Activated naive CD8-positive, alpha-beta T cell treated with anti-CD3 and anti-CD28 coated beads, Interleukin-2, amount 10 ng/mL, durations not matched to agents 7 days and 5 days (primary cell): ENCODE measurements at regions of chr12 and their contacts with region 1.

Region 1: GRCh38 chr12:8483079-8483478 is 27.3 kb downstream of the CLEC6A start:
- DNase-seq: no peak
- ATAC-seq: peak; percentile 99
- H3K4me3 Mint-ChIP-seq: peak overlapping the region; percentile 57
- H3K27ac Mint-ChIP-seq: peak overlapping the region; percentile 87
- H3K4me1 Mint-ChIP-seq: peaks cover 21% of the 10 kb centered on the region
- H3K27me3 Mint-ChIP-seq: peaks cover 21% of the 10 kb centered on the region

Region 2: DNA sequence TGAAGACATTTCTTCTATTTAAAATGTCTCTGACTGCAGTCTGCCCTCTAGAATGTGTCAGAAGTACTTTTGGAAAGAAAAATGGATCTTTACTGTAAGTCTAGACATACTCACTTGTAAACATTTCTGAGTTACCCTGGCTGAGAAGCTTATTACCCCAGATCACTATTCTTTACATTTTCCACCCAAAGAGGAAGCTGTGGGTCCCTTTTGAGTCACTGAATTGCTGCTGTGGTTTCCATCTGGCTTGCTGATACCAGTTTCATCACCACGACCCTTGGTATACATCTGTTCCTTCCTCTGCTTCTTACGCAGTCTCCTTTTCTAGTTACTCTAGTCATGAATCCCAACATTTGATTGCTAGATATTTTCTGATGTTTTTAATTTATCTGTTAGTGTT is 10.0 kb after region 1 on chr12:
- POLR2A ChIA-PET with region 1: interaction called, 15 read pairs
- DNase-seq: no peak
- ATAC-seq: peak; percentile 96
- H3K4me3 Mint-ChIP-seq: peak overlapping the region; percentile 62
- H3K27ac Mint-ChIP-seq: peak overlapping the region; percentile 86
- H3K4me1 Mint-ChIP-seq: peaks cover 38% of the 10 kb centered on the region
- H3K27me3 Mint-ChIP-seq: peaks cover 23% of the 10 kb centered on the region